CD4-positive, alpha-beta memory T cell (primary cell): ENCODE measurements at regions of chr20 and their contacts with region 1.

Region 1: DNA sequence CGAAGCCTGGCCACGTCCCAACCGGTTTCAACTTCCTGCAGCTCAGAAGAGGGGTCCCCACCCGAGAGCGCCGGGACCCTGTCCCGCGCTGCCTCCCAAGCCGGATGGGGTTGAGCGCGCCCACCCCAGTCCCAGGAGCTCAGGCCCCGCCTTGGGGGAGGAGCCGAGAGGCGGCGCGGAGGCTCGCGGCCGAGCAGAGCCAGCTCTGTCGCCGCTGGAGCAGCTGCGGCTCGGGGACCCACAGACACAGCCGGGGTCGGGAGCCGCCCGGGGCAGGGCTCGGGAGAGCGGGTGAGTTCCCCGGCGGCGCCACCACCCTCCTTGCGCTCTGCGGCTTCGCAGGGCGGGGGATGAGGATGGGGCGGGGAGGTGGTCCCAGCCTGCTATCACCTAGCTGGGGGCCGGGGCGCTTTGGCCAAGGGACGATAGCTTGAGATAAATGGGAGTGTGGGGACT is at the start of gene PPP1R16B:
- DNase-seq: peak; percentile 79 to 84 (median 80)
- H3K4me3 ChIP-seq: peak within 1 kb of the TSS; percentile 76 to 94
- H3K4me3 Mint-ChIP-seq: peak within 1 kb of the TSS; percentile 87 to 94 (median 92)
- H3K27ac ChIP-seq: peak within 1 kb of the TSS; percentile 96
- H3K27ac Mint-ChIP-seq: peak within 1 kb of the TSS; percentile 97 to 100 (median 99)
- H3K4me1 ChIP-seq: peaks cover 59% of the 10 kb centered on the region
- H3K4me1 Mint-ChIP-seq: peaks cover 45 to 58% (median 50%) of the 10 kb centered on the region in 4 donors
- H3K27me3 ChIP-seq: no peaks in the 10 kb centered on the region
- H3K27me3 Mint-ChIP-seq: no peaks in the 10 kb centered on the region
- total RNA-seq, gene PPP1R16B: 54.3 to 55.1 TPM

Region 2: DNA sequence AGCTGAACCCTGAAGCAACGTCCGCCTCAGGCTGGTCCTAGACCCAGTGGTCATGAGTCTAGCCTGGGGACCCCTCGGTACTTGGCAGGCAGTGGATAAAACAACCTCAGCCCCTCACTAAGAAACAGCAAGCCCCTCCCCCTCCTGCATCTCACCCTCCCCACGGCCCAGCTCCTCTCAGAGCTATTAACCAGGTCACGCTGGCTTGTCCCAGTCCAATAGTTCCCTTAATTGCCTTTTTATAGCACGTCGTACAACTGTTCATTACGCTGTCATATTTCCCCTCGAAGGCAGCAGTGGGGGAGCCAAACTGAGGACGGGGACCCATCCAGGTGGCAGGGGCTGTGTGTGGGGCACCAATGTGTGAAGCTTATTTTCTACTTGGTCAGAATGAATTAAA is 89.9 kb before region 1 on chr20:
- CTCF ChIA-PET with region 1: no interaction called
- POLR2A ChIA-PET with region 1: no interaction called
- intact Hi-C with region 1: no loop called
- DNase-seq: no peak
- H3K4me3 ChIP-seq: no peak overlapping the region
- H3K4me3 Mint-ChIP-seq: no peak overlapping the region
- H3K27ac ChIP-seq: no peak overlapping the region
- H3K27ac Mint-ChIP-seq: peak overlapping the region in 1 of 7 donors; percentile 36
- H3K4me1 ChIP-seq: no peaks in the 10 kb centered on the region
- H3K4me1 Mint-ChIP-seq: no peaks in the 10 kb centered on the region
- H3K27me3 ChIP-seq: peaks cover 12% of the 10 kb centered on the region
- H3K27me3 Mint-ChIP-seq: peaks cover 41 to 66% of the 10 kb centered on the region in 2 donors

Region 3: GRCh38 chr20:38790200-38791053 is 15.1 kb before region 1 on chr20:
- CTCF ChIA-PET with region 1: interaction called, 10 read pairs
- POLR2A ChIA-PET with region 1: interaction called, 3 read pairs
- intact Hi-C with region 1: no loop called
- DNase-seq: peak in 2 of 5 donors; percentile 39 to 59
- H3K4me3 ChIP-seq: no peak overlapping the region
- H3K4me3 Mint-ChIP-seq: peak overlapping the region in 3 of 8 donors; percentile 52 to 66 (median 59)
- H3K27ac ChIP-seq: no peak overlapping the region
- H3K27ac Mint-ChIP-seq: peak overlapping the region in 4 of 7 donors; percentile 68 to 90 (median 85)
- H3K4me1 ChIP-seq: peaks cover 7% of the 10 kb centered on the region
- H3K4me1 Mint-ChIP-seq: peaks cover 0 to 7% (median 6%) of the 10 kb centered on the region in 4 donors
- H3K27me3 ChIP-seq: no peaks in the 10 kb centered on the region
- H3K27me3 Mint-ChIP-seq: no peaks in the 10 kb centered on the region

Region 4: GRCh38 chr20:38825901-38826625 is 20.5 kb after region 1 on chr20:
- CTCF ChIA-PET with region 1: interaction called, 4 read pairs
- POLR2A ChIA-PET with region 1: interaction called, 12 read pairs
- intact Hi-C with region 1: no loop called
- DNase-seq: no peak
- H3K4me3 ChIP-seq: no peak overlapping the region
- H3K4me3 Mint-ChIP-seq: peak overlapping the region in 3 of 8 donors; percentile 12 to 51 (median 25)
- H3K27ac ChIP-seq: no peak overlapping the region
- H3K27ac Mint-ChIP-seq: peak overlapping the region in 6 of 7 donors; percentile 52 to 82 (median 80)
- H3K4me1 ChIP-seq: peaks cover 86% of the 10 kb centered on the region
- H3K4me1 Mint-ChIP-seq: peaks cover 54 to 99% (median 83%) of the 10 kb centered on the region in 4 donors
- H3K27me3 ChIP-seq: no peaks in the 10 kb centered on the region
- H3K27me3 Mint-ChIP-seq: no peaks in the 10 kb centered on the region

Region 5: GRCh38 chr20:38847840-38848239 is 42.3 kb after region 1 on chr20:
- CTCF ChIA-PET with region 1: interaction called, 6 read pairs
- POLR2A ChIA-PET with region 1: interaction called, 114 read pairs
- intact Hi-C with region 1: loop called (anchors 2 kb)
- DNase-seq: no peak
- H3K4me3 ChIP-seq: no peak overlapping the region
- H3K4me3 Mint-ChIP-seq: no peak overlapping the region
- H3K27ac ChIP-seq: no peak overlapping the region
- H3K27ac Mint-ChIP-seq: peak overlapping the region in 3 of 7 donors; percentile 63 to 85 (median 83)
- H3K4me1 ChIP-seq: peaks cover 68% of the 10 kb centered on the region
- H3K4me1 Mint-ChIP-seq: peaks cover 47 to 85% (median 66%) of the 10 kb centered on the region in 4 donors
- H3K27me3 ChIP-seq: no peaks in the 10 kb centered on the region
- H3K27me3 Mint-ChIP-seq: no peaks in the 10 kb centered on the region

Region 6: DNA sequence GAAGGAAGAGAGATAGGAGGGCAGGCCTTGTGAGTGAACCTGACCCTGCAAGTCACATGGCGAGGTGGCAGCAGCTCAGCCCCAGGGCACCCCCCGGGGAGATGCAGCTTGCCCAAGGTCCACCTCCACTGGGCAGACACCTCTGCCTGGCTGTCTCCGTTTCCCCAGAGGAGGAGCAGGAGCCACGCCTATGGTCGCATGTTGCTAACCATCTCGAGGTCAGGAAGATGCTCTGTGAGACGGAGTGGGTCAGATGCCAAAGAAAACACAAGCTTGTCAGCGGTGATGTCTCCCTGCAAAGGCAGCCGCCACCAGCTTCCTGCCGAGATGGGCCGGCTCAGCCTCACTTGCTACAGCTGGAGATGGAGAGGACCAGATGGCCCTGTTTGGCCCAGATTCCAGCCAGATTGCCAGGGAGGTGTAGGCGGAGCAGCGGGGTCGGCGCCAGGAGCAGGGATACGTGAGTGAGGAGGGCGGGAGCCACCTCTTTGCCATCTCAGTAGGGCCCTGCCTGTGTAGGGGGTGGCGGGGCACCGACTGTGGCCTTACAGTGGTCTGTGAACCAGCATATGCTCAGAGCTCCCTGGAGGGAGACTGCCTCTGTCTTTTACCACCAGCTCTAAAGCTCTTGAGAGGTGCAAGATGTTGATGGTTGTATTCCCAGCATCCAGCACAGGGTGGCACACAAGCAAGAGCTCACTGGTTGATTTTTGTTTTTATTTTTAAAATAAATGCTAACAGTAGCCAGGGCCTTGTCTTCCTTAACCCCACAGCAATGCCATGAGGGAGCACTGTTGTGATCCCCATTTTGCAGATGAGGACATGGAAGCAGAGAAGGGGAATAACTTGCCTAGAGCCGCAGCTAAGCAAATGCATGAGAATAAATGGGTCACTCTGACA is 77.8 kb after region 1 on chr20:
- CTCF ChIA-PET with region 1: interaction called, 11 read pairs
- POLR2A ChIA-PET with region 1: interaction called, 19 read pairs
- intact Hi-C with region 1: no loop called
- DNase-seq: no peak
- H3K4me3 ChIP-seq: no peak overlapping the region
- H3K4me3 Mint-ChIP-seq: peak overlapping the region in 5 of 8 donors; percentile 19 to 66 (median 55)
- H3K27ac ChIP-seq: peak overlapping the region; percentile 13
- H3K27ac Mint-ChIP-seq: peak overlapping the region; percentile 75 to 91 (median 85)
- H3K4me1 ChIP-seq: peaks cover 47% of the 10 kb centered on the region
- H3K4me1 Mint-ChIP-seq: peaks cover 36 to 69% (median 54%) of the 10 kb centered on the region in 4 donors
- H3K27me3 ChIP-seq: no peaks in the 10 kb centered on the region
- H3K27me3 Mint-ChIP-seq: no peaks in the 10 kb centered on the region

Region 7: DNA sequence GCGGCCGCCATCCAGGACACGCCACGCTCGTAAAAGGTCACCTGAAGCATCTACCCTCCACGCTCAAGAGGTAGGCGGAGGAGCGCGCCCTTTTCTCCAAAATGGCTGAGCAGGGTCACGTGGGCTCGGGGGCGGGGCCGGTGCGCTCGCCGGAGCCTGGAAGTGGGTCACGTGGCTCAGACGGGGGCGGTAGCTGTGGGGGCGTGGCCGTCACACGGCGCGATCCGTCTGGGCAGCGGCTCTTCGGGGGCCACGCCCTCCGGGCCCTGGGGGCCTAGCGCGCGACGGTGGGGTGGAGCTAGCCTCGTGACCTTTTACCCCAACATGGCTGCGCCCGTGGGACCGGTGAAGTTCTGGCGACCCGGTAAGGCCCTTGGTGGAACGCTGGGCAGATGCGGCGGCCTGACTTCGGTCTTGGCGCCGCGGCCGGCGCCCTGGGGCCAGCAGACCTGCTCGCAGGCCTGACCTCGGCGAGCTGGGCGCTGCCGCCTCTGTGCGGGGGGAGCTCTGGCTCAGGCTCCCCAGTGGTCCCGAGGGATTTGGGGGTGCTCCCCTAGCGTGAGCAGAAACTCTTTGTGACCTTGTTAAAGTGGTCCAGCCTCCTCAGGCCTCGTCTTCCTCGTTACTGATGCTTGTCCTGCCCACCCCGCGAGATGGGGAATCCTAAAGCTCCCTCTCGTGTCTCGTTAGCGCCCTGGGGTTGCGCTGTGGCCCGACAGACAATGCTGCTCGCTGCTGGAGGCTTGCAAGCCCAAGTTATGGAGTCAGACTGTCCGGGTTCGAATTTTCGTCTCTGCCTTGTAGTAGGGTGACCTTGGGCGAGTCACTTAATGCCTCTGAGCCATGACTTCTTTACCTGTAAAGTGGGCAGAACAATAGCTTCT is 156.8 kb after region 1 on chr20 and contains the start of gene DHX35:
- CTCF ChIA-PET with region 1: interaction called, 3 read pairs
- POLR2A ChIA-PET with region 1: interaction called, 15 read pairs
- intact Hi-C with region 1: loop called (anchors 1 kb)
- DNase-seq: peak; percentile 98 to 99 (median 98)
- H3K4me3 ChIP-seq: peak within 1 kb of the TSS; percentile 86 to 98
- H3K4me3 Mint-ChIP-seq: peak within 1 kb of the TSS; percentile 88 to 98 (median 96)
- H3K27ac ChIP-seq: peak within 1 kb of the TSS; percentile 76
- H3K27ac Mint-ChIP-seq: peak within 1 kb of the TSS; percentile 90 to 98 (median 96)
- H3K4me1 ChIP-seq: peaks cover 24% of the 10 kb centered on the region
- H3K4me1 Mint-ChIP-seq: peaks cover 12 to 31% (median 25%) of the 10 kb centered on the region in 4 donors
- H3K27me3 ChIP-seq: no peaks in the 10 kb centered on the region
- H3K27me3 Mint-ChIP-seq: no peaks in the 10 kb centered on the region
- total RNA-seq, gene DHX35: 11.5 to 11.8 TPM